ENCODE measurements at regions of chr4 and their contacts with region 1.

Region 1: GRCh38 chr4:95693594-95693993 is 144.8 kb upstream of the UNC5C start:
- DNase-seq: peak; percentile 48
- H3K4me3 ChIP-seq: no peak overlapping the region
- H3K27ac ChIP-seq: no peak overlapping the region
- H3K4me1 ChIP-seq: peaks cover 4% of the 10 kb centered on the region
- H3K27me3 ChIP-seq: no peaks in the 10 kb centered on the region
- CTCF ChIP-seq: peak; percentile 60 to 67

Region 2: DNA sequence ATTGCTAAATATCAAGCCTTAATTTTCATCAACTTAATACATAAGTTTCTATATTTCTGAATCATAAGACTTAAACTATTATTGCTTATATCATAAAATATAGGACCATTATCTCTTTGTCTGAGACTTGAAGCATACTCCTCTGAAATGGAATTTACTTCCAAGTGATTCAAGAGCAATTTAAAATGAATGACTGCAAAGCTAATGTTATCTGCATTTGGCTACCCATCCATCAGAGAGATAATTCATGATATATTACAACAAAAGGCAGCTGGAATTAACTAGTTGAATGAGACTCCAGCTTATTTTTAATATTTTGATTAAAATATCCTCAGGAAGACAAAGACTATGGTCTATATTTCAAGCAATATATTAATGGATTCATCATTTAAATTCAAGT is 353.4 kb before region 1 on chr4:
- CTCF ChIA-PET with region 1: no interaction called
- dilution Hi-C with region 1: no loop called
- in situ Hi-C with region 1: no loop called
- intact Hi-C with region 1: no loop called
- DNase-seq: no peak
- H3K4me3 ChIP-seq: no peak overlapping the region
- H3K27ac ChIP-seq: no peak overlapping the region
- H3K4me1 ChIP-seq: no peaks in the 10 kb centered on the region
- H3K27me3 ChIP-seq: no peaks in the 10 kb centered on the region
- CTCF ChIP-seq: no peak

Region 3: DNA sequence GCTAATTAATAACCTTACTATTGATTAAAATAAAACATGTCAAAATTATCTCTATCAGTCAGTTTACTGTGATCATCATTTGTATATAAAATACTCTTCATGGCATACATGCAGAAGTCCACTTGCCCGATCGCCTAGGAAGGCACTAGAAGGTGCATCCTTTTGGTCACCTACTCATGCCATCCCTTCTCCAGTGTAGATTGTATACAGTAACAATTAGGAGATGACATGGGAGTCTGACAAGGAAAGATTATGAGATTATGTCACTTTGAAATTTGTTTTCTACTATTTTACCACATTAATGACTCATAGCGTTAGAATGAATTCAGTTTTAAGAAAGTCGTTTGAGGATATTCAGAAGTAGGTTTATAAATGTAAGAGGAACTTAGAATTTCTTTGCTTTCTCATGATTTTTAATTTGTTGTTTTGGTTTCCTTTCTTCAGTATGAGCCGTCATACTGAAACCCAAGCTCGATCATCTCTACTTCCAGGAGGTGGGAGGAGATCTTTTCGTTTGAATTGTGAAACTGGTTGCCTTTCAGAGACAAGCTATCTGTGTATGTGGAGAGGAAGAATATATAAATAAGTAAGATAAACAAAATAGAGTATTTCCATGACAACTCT is 93.7 kb before region 1 on chr4:
- CTCF ChIA-PET with region 1: no interaction called
- dilution Hi-C with region 1: no loop called
- in situ Hi-C with region 1: no loop called
- intact Hi-C with region 1: no loop called
- DNase-seq: no peak
- H3K4me3 ChIP-seq: no peak overlapping the region
- H3K27ac ChIP-seq: no peak overlapping the region
- H3K4me1 ChIP-seq: no peaks in the 10 kb centered on the region
- H3K27me3 ChIP-seq: no peaks in the 10 kb centered on the region
- CTCF ChIP-seq: no peak

Region 4: GRCh38 chr4:95651891-95652290 is 41.7 kb before region 1 on chr4:
- CTCF ChIA-PET with region 1: no interaction called
- dilution Hi-C with region 1: no loop called
- in situ Hi-C with region 1: no loop called
- intact Hi-C with region 1: no loop called
- DNase-seq: no peak
- H3K4me3 ChIP-seq: no peak overlapping the region
- H3K27ac ChIP-seq: no peak overlapping the region
- H3K4me1 ChIP-seq: no peaks in the 10 kb centered on the region
- H3K27me3 ChIP-seq: no peaks in the 10 kb centered on the region
- CTCF ChIP-seq: no peak

Region 5: GRCh38 chr4:96352051-96352517 is 658.5 kb after region 1 on chr4:
- CTCF ChIA-PET with region 1: no interaction called
- dilution Hi-C with region 1: no loop called
- in situ Hi-C with region 1: no loop called
- intact Hi-C with region 1: loop called (anchors 1 kb)
- DNase-seq: peak; percentile 14
- H3K4me3 ChIP-seq: no peak overlapping the region
- H3K27ac ChIP-seq: no peak overlapping the region
- H3K4me1 ChIP-seq: peaks cover 6% of the 10 kb centered on the region
- H3K27me3 ChIP-seq: peaks cover 2% of the 10 kb centered on the region
- CTCF ChIP-seq: peak; percentile 14 to 50

Region 6: GRCh38 chr4:97153042-97153441 is 1459.4 kb after region 1 on chr4:
- CTCF ChIA-PET with region 1: interaction called, 17 read pairs
- dilution Hi-C with region 1: no loop called
- in situ Hi-C with region 1: no loop called
- intact Hi-C with region 1: no loop called
- DNase-seq: peak; percentile 7
- H3K4me3 ChIP-seq: no peak overlapping the region
- H3K27ac ChIP-seq: no peak overlapping the region
- H3K4me1 ChIP-seq: no peaks in the 10 kb centered on the region
- H3K27me3 ChIP-seq: no peaks in the 10 kb centered on the region
- CTCF ChIP-seq: peak; percentile 14 to 46

Measured in mammary epithelial cell (primary cell).